A673 (cell line): ENCODE measurements at regions of chr1 and their contacts with region 1.

Region 1: GRCh38 chr1:182084487-182085316 is 23.2 kb upstream of the ZNF648 start:
- DNase-seq: peak; percentile 79
- H3K4me3 ChIP-seq: no peak overlapping the region
- H3K27ac ChIP-seq: no peak overlapping the region
- H3K4me1 ChIP-seq: no peaks in the 10 kb centered on the region
- H3K27me3 ChIP-seq: no peaks in the 10 kb centered on the region
- CTCF ChIP-seq: peak; percentile 68

Region 2: GRCh38 chr1:181479137-181479745 is 605.5 kb before region 1 on chr1:
- CTCF ChIA-PET with region 1: interaction called, 4 read pairs
- POLR2A ChIA-PET with region 1: no interaction called
- intact Hi-C with region 1: loop called (anchors 1 kb)
- DNase-seq: peak; percentile 67
- H3K4me3 ChIP-seq: no peak overlapping the region
- H3K27ac ChIP-seq: no peak overlapping the region
- H3K4me1 ChIP-seq: no peaks in the 10 kb centered on the region
- H3K27me3 ChIP-seq: peaks cover 90% of the 10 kb centered on the region
- CTCF ChIP-seq: peak; percentile 79

Region 3: DNA sequence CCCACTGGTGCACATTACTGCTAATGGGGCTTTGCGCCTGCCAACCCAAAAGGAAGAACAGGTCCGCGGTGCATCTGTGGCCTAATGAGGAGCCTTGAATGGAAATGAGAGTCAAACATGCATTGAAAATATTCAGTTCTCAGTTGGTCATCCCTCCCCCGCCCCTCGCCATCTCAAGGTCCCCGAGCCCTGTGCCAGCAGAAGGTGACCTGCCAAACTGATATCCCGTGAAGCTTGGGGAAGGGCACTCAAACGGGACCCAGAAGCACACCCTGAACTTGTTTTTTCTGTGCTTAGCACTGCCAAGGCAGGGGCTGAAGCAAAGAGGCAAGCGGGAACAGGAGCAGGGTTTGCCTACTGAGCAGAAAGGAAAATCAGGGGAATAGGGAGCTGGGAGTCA is 44.7 kb after region 1 on chr1:
- CTCF ChIA-PET with region 1: no interaction called
- POLR2A ChIA-PET with region 1: no interaction called
- intact Hi-C with region 1: no loop called
- DNase-seq: no peak
- H3K4me3 ChIP-seq: no peak overlapping the region
- H3K27ac ChIP-seq: no peak overlapping the region
- H3K4me1 ChIP-seq: no peaks in the 10 kb centered on the region
- H3K27me3 ChIP-seq: no peaks in the 10 kb centered on the region
- CTCF ChIP-seq: no peak

Region 4: DNA sequence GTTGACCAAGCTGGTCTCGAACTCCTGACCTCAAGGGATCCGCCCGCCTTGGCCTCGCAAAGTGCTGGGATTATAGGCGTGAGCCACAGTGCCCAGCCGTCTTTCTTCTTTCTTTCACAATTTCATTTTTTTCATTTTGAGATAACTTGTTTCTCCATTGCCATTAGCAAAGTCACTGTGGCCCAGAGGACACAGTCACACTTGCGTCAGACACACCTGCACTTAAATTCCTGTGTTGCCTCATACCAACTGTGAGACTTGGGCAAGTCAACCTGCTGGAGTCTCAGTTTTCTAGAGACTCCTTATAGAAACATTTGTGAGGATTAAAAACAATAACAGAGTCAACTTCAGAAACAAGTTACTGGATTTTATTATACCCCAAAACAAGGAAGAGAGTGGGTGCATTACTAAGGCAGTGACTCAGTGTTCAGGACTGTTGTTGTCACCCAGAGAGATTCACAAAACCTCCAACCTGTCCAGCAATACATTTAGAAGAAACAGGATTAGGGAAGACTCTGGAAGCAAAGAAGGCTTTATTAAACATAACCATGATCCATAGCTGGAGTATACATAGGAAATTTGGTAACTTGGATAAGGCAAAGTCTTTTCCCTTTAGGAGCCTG is 313.2 kb after region 1 on chr1:
- CTCF ChIA-PET with region 1: interaction called, 9 read pairs
- POLR2A ChIA-PET with region 1: no interaction called
- intact Hi-C with region 1: loop called (anchors 1 kb)
- DNase-seq: no peak
- H3K4me3 ChIP-seq: no peak overlapping the region
- H3K27ac ChIP-seq: no peak overlapping the region
- H3K4me1 ChIP-seq: peaks cover 6% of the 10 kb centered on the region
- H3K27me3 ChIP-seq: no peaks in the 10 kb centered on the region
- CTCF ChIP-seq: no peak

Region 5: DNA sequence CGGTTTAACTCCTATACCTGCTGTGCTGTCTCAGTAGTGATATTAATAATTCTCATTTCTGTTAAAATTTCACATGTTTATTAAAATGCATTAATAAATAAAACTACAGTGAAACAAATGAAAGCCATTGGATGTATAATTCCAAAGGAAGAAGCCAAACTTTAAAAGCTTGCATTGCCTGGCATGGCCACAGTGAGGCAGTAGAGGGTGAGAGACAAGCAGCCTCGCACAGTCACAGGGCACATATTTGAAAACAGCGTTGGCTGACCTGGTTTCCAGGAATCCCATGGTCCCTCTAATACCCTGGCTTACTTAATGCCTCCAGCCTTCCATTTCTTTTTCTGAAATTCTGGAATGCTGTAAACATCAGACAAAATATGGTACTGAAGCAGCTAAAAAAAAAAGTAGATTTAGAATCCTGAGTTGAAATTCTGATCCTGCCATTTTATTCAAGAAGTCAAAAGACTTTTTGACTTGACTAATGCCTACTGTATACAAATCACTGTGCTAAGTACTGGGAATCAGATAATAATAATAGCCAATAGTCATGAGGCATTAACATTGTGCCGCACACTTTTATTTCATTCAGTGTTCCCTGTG is 511.0 kb after region 1 on chr1:
- CTCF ChIA-PET with region 1: interaction called, 7 read pairs
- POLR2A ChIA-PET with region 1: no interaction called
- intact Hi-C with region 1: loop called (anchors 2 kb)
- DNase-seq: peak; percentile 76
- H3K4me3 ChIP-seq: no peak overlapping the region
- H3K27ac ChIP-seq: no peak overlapping the region
- H3K4me1 ChIP-seq: peaks cover 5% of the 10 kb centered on the region
- H3K27me3 ChIP-seq: no peaks in the 10 kb centered on the region
- CTCF ChIP-seq: peak; percentile 94

Region 6: DNA sequence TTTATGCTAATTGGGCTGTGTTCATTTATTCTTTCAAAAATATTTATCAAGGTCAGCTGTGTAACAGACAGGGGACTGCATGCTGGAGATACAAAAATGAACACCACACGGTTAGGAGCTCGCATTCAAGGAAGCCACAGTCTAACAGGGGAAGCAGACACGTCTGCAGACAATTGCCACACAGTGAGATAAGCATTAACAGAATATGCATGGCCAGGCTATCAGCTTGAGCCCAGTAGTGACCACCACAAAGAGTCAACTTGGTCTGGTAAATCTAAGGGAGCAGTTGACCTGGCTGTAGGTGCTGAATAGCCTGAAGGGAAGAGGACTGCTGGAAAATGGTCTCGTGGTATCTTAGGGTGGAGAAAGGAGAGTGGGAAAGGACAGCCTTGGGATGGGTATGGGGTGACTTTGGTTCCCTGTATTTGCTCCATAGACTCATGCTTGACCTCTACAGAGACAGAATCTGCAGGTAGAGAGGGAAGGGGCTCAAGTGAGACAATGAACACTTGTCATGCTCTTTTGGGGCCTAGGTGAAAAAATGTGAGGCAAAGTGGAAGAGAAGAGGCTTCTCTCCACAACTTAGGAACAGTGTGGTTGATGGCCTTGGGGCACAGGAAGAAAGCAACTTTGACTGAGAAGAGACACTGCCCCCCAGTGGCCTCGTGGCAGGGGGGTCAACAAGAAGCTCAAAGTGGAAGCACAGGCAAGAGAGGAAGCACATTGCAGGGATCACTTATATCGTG is 697.3 kb after region 1 on chr1:
- CTCF ChIA-PET with region 1: interaction called, 3 read pairs
- POLR2A ChIA-PET with region 1: no interaction called
- intact Hi-C with region 1: loop called (anchors 5 kb)
- DNase-seq: peak; percentile 80
- H3K4me3 ChIP-seq: no peak overlapping the region
- H3K27ac ChIP-seq: no peak overlapping the region
- H3K4me1 ChIP-seq: no peaks in the 10 kb centered on the region
- H3K27me3 ChIP-seq: no peaks in the 10 kb centered on the region
- CTCF ChIP-seq: peak; percentile 84